CD14-positive monocyte (primary cell): ENCODE measurements at regions of chr3 and their contacts with region 1.

Region 1: DNA sequence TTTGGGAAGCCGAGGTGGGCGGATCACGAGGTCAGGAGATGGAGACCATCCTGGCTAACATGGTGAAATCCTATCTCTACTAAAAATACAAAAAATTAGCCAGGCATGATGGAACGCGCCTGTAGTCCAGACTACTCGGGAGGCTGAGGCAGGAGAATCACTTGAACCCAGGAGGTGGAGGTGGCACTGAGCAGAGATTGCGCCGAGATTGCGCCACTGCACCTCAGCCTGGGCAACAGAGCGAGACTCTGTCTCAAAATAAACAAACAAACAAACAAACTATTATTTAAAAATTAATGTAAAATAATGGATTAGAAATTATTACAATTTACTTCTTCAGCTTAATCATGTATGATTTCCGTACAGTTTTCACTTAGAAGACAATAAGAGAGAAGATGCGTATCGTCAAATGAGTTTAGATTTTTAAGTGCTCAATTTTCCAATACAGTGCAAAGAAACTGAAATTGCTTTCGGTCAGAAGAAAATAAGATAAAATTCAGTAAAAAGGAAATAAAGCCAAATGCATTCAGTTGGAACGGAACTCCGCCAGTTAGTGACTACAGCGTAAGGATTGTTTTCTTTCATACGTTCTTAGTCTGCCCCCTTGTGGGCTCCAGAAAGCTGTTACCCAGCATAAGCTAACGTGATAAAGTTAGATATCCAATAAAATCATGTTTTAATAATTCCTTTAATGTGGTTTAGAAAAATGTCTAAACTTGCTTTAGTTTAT is 24.8 kb downstream of the AADAC start:
- DNase-seq: peak; percentile 55 to 78 (median 65)
- H3K4me3 ChIP-seq: peak overlapping the region in 1 of 3 experiments; percentile 33
- H3K4me3 Mint-ChIP-seq: peak overlapping the region in 1 of 2 donors; percentile 64
- H3K27ac ChIP-seq: no peak overlapping the region
- H3K27ac Mint-ChIP-seq: no peak overlapping the region
- H3K4me1 ChIP-seq: peaks cover 4 to 5% of the 10 kb centered on the region in 2 donors
- H3K4me1 Mint-ChIP-seq: peaks cover 13% of the 10 kb centered on the region
- H3K27me3 ChIP-seq: no peaks in the 10 kb centered on the region
- H3K27me3 Mint-ChIP-seq: peaks cover 0 to 5% (median 1%) of the 10 kb centered on the region in 3 donors
- CTCF ChIP-seq: peak; percentile 82

Region 2: DNA sequence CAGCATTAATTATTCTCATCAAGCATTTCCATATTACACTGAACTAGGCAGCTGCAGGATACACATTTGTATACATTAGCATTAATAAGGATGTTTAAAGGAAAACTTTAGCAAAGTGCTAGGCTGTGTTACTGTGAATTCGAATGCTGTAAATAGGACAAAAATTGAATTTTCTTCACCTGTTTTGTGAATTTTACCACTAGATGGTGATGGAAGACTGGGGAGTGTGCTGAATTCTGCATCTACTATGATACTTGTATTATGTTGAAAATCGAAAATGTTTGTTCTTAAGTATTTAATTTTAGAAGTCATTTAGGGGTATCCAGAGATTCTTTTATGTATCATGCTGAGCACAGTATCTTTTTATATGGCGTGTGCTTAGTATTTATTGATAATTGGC is 548.1 kb before region 1 on chr3:
- intact Hi-C with region 1: loop called (anchors 5 kb)
- DNase-seq: peak; percentile 38 to 54 (median 41)
- H3K4me3 ChIP-seq: no peak overlapping the region
- H3K4me3 Mint-ChIP-seq: no peak overlapping the region
- H3K27ac ChIP-seq: no peak overlapping the region
- H3K27ac Mint-ChIP-seq: no peak overlapping the region
- H3K4me1 ChIP-seq: no peaks in the 10 kb centered on the region
- H3K4me1 Mint-ChIP-seq: no peaks in the 10 kb centered on the region
- H3K27me3 ChIP-seq: no peaks in the 10 kb centered on the region
- H3K27me3 Mint-ChIP-seq: no peaks in the 10 kb centered on the region
- CTCF ChIP-seq: peak; percentile 82

Region 3: GRCh38 chr3:151439652-151440129 is 399.1 kb before region 1 on chr3:
- intact Hi-C with region 1: loop called (anchors 10 kb)
- DNase-seq: peak; percentile 37 to 60 (median 41)
- H3K4me3 ChIP-seq: no peak overlapping the region
- H3K4me3 Mint-ChIP-seq: no peak overlapping the region
- H3K27ac ChIP-seq: no peak overlapping the region
- H3K27ac Mint-ChIP-seq: no peak overlapping the region
- H3K4me1 ChIP-seq: peaks cover under 1 to 2% of the 10 kb centered on the region in 2 donors
- H3K4me1 Mint-ChIP-seq: peaks cover under 1% of the 10 kb centered on the region
- H3K27me3 ChIP-seq: no peaks in the 10 kb centered on the region
- H3K27me3 Mint-ChIP-seq: no peaks in the 10 kb centered on the region
- CTCF ChIP-seq: peak; percentile 85

Region 4: GRCh38 chr3:151918253-151919029 is 79.7 kb after region 1 on chr3:
- intact Hi-C with region 1: loop called (anchors 2 to 10 kb)
- DNase-seq: peak; percentile 26 to 57 (median 43)
- H3K4me3 ChIP-seq: no peak overlapping the region
- H3K4me3 Mint-ChIP-seq: no peak overlapping the region
- H3K27ac ChIP-seq: no peak overlapping the region
- H3K27ac Mint-ChIP-seq: no peak overlapping the region
- H3K4me1 ChIP-seq: no peaks in the 10 kb centered on the region
- H3K4me1 Mint-ChIP-seq: no peaks in the 10 kb centered on the region
- H3K27me3 ChIP-seq: no peaks in the 10 kb centered on the region
- H3K27me3 Mint-ChIP-seq: no peaks in the 10 kb centered on the region
- CTCF ChIP-seq: peak; percentile 84